Posterior vena cava (tissue), 2 donors: ENCODE measurements at regions of chr16 and their contacts with region 1.

Region 1: DNA sequence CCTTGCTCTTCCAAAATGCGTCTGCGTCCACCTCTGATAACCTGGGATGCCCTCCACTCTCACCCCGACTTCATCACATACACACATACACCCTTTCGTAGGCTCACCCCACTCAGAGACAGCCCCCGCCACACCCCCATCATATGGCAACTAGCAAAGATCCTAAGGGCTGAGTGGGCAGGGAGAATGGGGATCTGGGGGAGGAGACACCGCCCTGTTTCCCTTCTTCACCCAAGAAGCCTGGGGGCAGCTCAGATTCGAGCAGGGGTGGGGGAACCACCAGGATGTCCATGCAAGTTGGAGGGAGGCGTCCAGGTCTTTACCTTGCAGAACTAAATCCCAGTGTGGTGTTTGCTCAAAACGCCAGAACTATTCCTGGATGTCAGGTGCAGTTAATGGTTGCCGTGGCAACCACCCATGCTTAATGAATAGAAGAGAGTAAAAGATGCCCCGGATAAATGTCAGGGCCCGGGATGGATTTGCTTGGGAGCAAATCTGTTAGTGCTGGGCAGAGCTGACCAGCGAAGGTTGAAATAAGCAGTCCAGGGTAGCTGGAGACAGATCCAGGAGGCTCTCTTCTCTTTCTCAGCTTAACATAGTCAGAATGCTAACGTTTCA is 72.8 kb downstream of the CACNG3 start:
- DNase-seq: no peak

Region 2: DNA sequence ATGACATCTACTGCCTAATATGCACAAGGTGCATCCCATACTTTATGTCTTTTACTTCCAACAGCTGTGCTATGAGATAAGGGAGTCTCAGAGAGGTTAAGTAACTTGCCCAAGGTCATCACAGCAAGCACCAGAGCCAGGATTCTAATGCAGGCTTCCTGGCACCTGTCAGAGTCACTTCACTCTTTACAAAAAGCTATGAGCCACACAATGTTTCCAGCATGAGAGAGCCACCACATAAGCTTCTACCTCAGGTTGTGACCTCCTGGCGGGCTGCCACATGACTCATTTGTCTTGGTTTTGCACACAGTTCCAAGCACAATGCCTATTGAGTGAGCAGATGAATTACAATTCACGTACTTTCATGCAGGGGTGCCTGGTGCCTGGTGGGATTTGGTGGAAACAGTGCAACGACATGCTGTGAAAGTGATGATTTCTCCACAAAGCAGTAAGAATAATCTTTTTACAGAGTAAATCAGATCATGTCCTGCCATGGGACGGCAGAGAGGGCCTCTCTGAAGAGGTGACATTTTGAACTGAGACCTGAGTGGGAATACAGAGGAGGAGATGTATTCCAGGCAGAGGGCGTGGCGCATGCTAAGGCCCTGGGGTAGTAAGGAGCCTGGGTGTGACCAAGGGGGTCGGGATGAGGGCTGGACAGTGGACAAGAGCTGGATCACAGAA is 19.6 kb before region 1 on chr16:
- intact Hi-C with region 1: no loop called
- DNase-seq: no peak

Region 3: GRCh38 chr16:24396350-24397271 is 67.7 kb after region 1 on chr16:
- intact Hi-C with region 1: loop called in 1 of 2 experiments (anchors 1 kb)
- DNase-seq: no peak

Region 4: DNA sequence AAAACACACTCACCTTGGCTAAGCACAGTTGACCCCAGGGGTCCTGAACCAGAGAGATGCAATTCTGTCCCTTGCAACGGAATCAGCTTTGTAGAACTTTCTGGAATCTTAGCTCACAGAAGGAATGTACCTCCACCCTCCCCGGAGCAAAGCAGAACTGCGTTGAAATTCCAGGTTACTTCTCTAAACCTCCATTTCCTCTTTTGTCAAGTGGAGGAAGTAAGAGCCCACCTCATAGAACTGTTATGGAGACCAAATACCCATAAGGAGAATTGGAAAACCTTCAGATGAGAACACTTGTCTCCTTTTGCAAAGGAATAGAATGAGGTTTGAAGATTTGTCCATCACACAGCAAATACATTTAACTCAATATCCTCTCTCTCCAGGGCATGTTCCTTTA is 123.8 kb after region 1 on chr16:
- intact Hi-C with region 1: no loop called
- DNase-seq: no peak

Region 5: GRCh38 chr16:24800586-24800985 is 471.6 kb after region 1 on chr16:
- intact Hi-C with region 1: no loop called
- DNase-seq: no peak